Prostate gland (tissue), 2 donors: ENCODE measurements at regions of chr18 and their contacts with region 1.

Region 1: GRCh38 chr18:4106407-4107033 is 348.6 kb downstream of the DLGAP1 start:
- DNase-seq: peak; percentile 54
- H3K4me3 ChIP-seq: no peak overlapping the region
- H3K27ac ChIP-seq: peak overlapping the region in 1 of 2 donors; percentile 2
- H3K4me1 ChIP-seq: no peaks in the 10 kb centered on the region
- H3K27me3 ChIP-seq: no peaks in the 10 kb centered on the region
- CTCF ChIP-seq: peak; percentile 55 to 78 (median 66)
- POLR2A ChIP-seq: no peak

Region 2: GRCh38 chr18:3952031-3952430 is 154.5 kb before region 1 on chr18:
- intact Hi-C with region 1: no loop called
- DNase-seq: no peak
- H3K4me3 ChIP-seq: no peak overlapping the region
- H3K27ac ChIP-seq: no peak overlapping the region
- H3K4me1 ChIP-seq: no peaks in the 10 kb centered on the region
- H3K27me3 ChIP-seq: no peaks in the 10 kb centered on the region
- CTCF ChIP-seq: no peak
- POLR2A ChIP-seq: no peak

Region 3: GRCh38 chr18:4369705-4370104 is 263.2 kb after region 1 on chr18:
- intact Hi-C with region 1: no loop called
- DNase-seq: no peak
- H3K4me3 ChIP-seq: no peak overlapping the region
- H3K27ac ChIP-seq: no peak overlapping the region
- H3K4me1 ChIP-seq: no peaks in the 10 kb centered on the region
- H3K27me3 ChIP-seq: no peaks in the 10 kb centered on the region
- CTCF ChIP-seq: no peak
- POLR2A ChIP-seq: no peak

Region 4: GRCh38 chr18:5057386-5058348 is 951.1 kb after region 1 on chr18:
- intact Hi-C with region 1: loop called (anchors 10 kb)
- DNase-seq: no peak
- H3K4me3 ChIP-seq: no peak overlapping the region
- H3K27ac ChIP-seq: no peak overlapping the region
- H3K4me1 ChIP-seq: no peaks in the 10 kb centered on the region
- H3K27me3 ChIP-seq: no peaks in the 10 kb centered on the region
- CTCF ChIP-seq: peak in 3 of 4 experiments; percentile 42 to 51 (median 46)
- POLR2A ChIP-seq: no peak